ENCODE measurements at regions of chr14 and their contacts with region 1.

Region 1: GRCh38 chr14:24241829-24242443 is 487 bp downstream of the TINF2 start:
- DNase-seq: no peak
- ATAC-seq: peak; percentile 83
- H3K4me3 ChIP-seq: peak overlapping the region; percentile 71 to 91 (median 88)
- H3K4me3 Mint-ChIP-seq: peak overlapping the region; percentile 98
- H3K27ac ChIP-seq: peak overlapping the region; percentile 98 to 100
- H3K27ac Mint-ChIP-seq: peak overlapping the region; percentile 100
- H3K4me1 ChIP-seq: peaks cover 47 to 49% of the 10 kb centered on the region in 2 donors
- H3K4me1 Mint-ChIP-seq: peaks cover 64% of the 10 kb centered on the region
- H3K27me3 ChIP-seq: no peaks in the 10 kb centered on the region
- H3K27me3 Mint-ChIP-seq: no peaks in the 10 kb centered on the region
- CTCF ChIP-seq: peak; percentile 23

Region 2: GRCh38 chr14:24135834-24136542 is 105.9 kb before region 1 on chr14 and contains the start of gene PSME1:
- CTCF ChIA-PET with region 1: interaction called, 3 read pairs
- POLR2A ChIA-PET with region 1: interaction called, 10 read pairs
- intact Hi-C with region 1: loop called (anchors 1 kb)
- DNase-seq: peak; percentile 96
- ATAC-seq: peak; percentile 97
- H3K4me3 ChIP-seq: peak within 1 kb of the TSS; percentile 54 to 96 (median 78)
- H3K4me3 Mint-ChIP-seq: peak within 1 kb of the TSS; percentile 92
- H3K27ac ChIP-seq: peak within 1 kb of the TSS; percentile 87 to 97
- H3K27ac Mint-ChIP-seq: peak within 1 kb of the TSS; percentile 94
- H3K4me1 ChIP-seq: peaks cover 33 to 43% of the 10 kb centered on the region in 2 donors
- H3K4me1 Mint-ChIP-seq: peaks cover 57% of the 10 kb centered on the region
- H3K27me3 ChIP-seq: no peaks in the 10 kb centered on the region
- H3K27me3 Mint-ChIP-seq: no peaks in the 10 kb centered on the region
- CTCF ChIP-seq: no peak
- total RNA-seq, gene PSME1: 227 and 237 TPM in 2 replicates

Region 3: DNA sequence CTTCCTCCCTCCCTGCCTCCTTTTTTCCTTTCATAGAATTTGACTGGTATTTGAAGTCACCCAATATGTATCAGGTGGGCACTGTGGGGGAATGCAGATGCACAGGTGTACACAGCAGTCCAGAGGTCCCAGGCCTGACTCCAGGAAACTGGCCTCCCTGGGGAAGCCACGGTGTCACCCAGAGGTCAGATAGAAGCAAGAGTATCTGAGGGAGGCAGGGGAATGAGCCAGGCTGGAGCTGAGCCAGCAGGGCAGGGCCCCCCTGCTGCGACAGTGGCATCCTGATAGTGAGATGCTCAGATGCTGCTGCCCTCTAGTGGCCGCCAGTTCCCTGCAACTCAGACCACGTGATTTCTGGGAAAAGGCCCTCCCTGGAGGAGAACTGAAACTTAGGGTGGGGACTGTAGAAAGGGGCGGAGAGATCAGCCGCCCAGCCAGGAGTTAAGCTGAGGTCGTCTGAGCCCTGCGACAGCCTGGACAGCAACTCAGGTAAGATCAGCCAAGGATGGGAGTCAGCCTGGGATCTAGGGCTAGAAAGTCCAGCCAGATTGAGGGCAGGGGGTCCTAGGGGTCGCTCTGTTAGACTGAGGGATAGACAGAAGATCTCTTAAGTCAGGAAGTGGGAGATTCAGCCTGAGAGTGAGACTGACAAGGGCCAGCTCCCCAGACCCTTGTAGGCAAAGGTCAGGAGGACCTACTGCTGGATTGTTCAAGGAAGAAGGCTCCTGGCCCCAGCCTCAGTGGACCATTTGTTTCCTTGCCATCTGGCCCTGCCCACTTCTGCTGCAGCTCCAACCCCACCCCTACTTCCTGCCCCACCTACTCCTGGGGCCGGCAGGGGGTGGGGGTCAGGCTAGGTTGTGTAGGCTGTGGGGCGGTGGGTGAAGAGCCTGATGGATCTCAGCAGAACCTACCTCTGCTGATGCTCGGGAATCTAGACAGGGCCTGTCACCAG is 80.8 kb before region 1 on chr14 and contains the start of gene IRF9:
- CTCF ChIA-PET with region 1: interaction called, 11 read pairs
- POLR2A ChIA-PET with region 1: no interaction called
- intact Hi-C with region 1: loop called (anchors 1 kb)
- DNase-seq: peak; percentile 97
- ATAC-seq: peak; percentile 94
- H3K4me3 ChIP-seq: peak within 1 kb of the TSS; percentile 69 to 100 (median 91)
- H3K4me3 Mint-ChIP-seq: peak within 1 kb of the TSS; percentile 100
- H3K27ac ChIP-seq: peak within 1 kb of the TSS; percentile 85 to 88
- H3K27ac Mint-ChIP-seq: peak within 1 kb of the TSS; percentile 99
- H3K4me1 ChIP-seq: peaks cover 29 to 39% of the 10 kb centered on the region in 2 donors
- H3K4me1 Mint-ChIP-seq: peaks cover 42% of the 10 kb centered on the region
- H3K27me3 ChIP-seq: no peaks in the 10 kb centered on the region
- H3K27me3 Mint-ChIP-seq: no peaks in the 10 kb centered on the region
- CTCF ChIP-seq: peak; percentile 81
- total RNA-seq, gene IRF9: 243 and 269 TPM in 2 replicates

Region 4: GRCh38 chr14:24215495-24216344 is 26.2 kb before region 1 on chr14 and contains the start of gene MDP1:
- CTCF ChIA-PET with region 1: interaction called, 25 read pairs
- POLR2A ChIA-PET with region 1: interaction called, 17 read pairs
- intact Hi-C with region 1: loop called (anchors 1 kb)
- DNase-seq: peak; percentile 94
- ATAC-seq: peak; percentile 75
- H3K4me3 ChIP-seq: peak within 1 kb of the TSS; percentile 88 to 99 (median 96)
- H3K4me3 Mint-ChIP-seq: peak within 1 kb of the TSS; percentile 93
- H3K27ac ChIP-seq: peak within 1 kb of the TSS; percentile 89 to 98
- H3K27ac Mint-ChIP-seq: peak within 1 kb of the TSS; percentile 96
- H3K4me1 ChIP-seq: peaks cover 32 to 33% of the 10 kb centered on the region in 2 donors
- H3K4me1 Mint-ChIP-seq: peaks cover 38% of the 10 kb centered on the region
- H3K27me3 ChIP-seq: no peaks in the 10 kb centered on the region
- H3K27me3 Mint-ChIP-seq: no peaks in the 10 kb centered on the region
- CTCF ChIP-seq: peak; percentile 80
- total RNA-seq, gene MDP1: 11.3 and 17.0 TPM in 2 replicates

Region 5: GRCh38 chr14:24289649-24290249 is 47.8 kb after region 1 on chr14:
- CTCF ChIA-PET with region 1: interaction called, 254 read pairs
- POLR2A ChIA-PET with region 1: interaction called, 6 read pairs
- intact Hi-C with region 1: no loop called
- DNase-seq: peak; percentile 56
- ATAC-seq: peak; percentile 87
- H3K4me3 ChIP-seq: no peak overlapping the region
- H3K4me3 Mint-ChIP-seq: peak overlapping the region; percentile 34
- H3K27ac ChIP-seq: no peak overlapping the region
- H3K27ac Mint-ChIP-seq: peak overlapping the region; percentile 41
- H3K4me1 ChIP-seq: peaks cover 10 to 18% of the 10 kb centered on the region in 2 donors
- H3K4me1 Mint-ChIP-seq: peaks cover 12% of the 10 kb centered on the region
- H3K27me3 ChIP-seq: no peaks in the 10 kb centered on the region
- H3K27me3 Mint-ChIP-seq: no peaks in the 10 kb centered on the region
- CTCF ChIP-seq: no peak

Region 6: GRCh38 chr14:24332268-24332993 is 90.5 kb after region 1 on chr14:
- CTCF ChIA-PET with region 1: interaction called, 70 read pairs
- POLR2A ChIA-PET with region 1: interaction called, 6 read pairs
- intact Hi-C with region 1: loop called (anchors 1 kb)
- DNase-seq: peak; percentile 91
- ATAC-seq: peak; percentile 95
- H3K4me3 ChIP-seq: peak overlapping the region in 4 of 5 experiments; percentile 37 to 67 (median 44)
- H3K4me3 Mint-ChIP-seq: peak overlapping the region; percentile 93
- H3K27ac ChIP-seq: no peak overlapping the region
- H3K27ac Mint-ChIP-seq: peak overlapping the region; percentile 76
- H3K4me1 ChIP-seq: peaks cover 39 to 43% of the 10 kb centered on the region in 2 donors
- H3K4me1 Mint-ChIP-seq: peaks cover 39% of the 10 kb centered on the region
- H3K27me3 ChIP-seq: peaks cover 0 to 33% (median 19%) of the 10 kb centered on the region in 4 experiments
- H3K27me3 Mint-ChIP-seq: peaks cover 17% of the 10 kb centered on the region
- CTCF ChIP-seq: peak; percentile 80

Region 7: DNA sequence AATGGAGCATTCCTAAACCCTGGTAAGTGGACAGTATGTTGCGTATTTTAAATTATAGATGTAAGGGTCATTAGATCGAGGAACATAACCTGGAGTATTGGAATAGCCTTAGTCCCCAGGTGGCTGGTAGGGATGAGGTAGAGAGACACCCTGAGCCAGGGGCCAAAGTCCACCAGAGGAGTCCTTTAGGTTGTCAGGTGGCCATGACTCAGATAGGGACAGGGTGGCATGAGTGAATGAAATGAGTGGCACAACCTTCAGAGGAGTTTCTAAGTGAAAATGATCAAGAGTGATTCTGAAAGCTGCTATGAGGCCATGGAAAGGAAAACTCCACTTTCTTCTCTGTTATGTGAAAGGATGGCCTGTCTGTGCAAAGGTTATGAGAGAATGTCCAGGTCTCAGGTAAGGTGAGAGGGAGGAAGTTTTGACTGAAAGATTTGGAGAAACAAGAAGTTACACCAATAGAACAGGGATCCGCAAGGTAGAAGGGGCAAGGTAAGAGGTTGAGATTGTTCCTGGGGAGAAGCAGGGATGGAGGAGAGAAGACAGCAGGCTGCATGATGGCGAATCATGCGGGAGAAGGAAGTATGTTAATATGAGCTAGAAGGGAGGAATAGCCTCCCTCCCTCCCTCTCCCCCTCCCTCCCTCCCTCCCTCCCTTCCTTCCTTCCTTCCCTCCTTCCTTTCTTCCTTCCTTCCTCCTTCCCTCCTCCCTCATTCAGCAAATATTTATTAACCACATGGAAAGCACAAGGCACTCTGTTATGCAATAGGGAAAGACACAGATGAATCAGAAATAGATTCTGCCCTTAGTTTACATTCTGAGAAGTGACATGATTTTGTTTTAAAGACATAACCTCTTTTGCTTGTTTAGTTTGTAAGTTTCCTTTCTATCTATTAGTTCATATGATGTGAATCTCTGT is 111.9 kb after region 1 on chr14:
- CTCF ChIA-PET with region 1: no interaction called
- POLR2A ChIA-PET with region 1: no interaction called
- intact Hi-C with region 1: no loop called
- DNase-seq: no peak
- ATAC-seq: no peak
- H3K4me3 ChIP-seq: no peak overlapping the region
- H3K4me3 Mint-ChIP-seq: no peak overlapping the region
- H3K27ac ChIP-seq: no peak overlapping the region
- H3K27ac Mint-ChIP-seq: no peak overlapping the region
- H3K4me1 ChIP-seq: no peaks in the 10 kb centered on the region
- H3K4me1 Mint-ChIP-seq: no peaks in the 10 kb centered on the region
- H3K27me3 ChIP-seq: peaks cover 0 to 32% (median 12%) of the 10 kb centered on the region in 4 experiments
- H3K27me3 Mint-ChIP-seq: peaks cover 45% of the 10 kb centered on the region
- CTCF ChIP-seq: no peak

Measured in B cell (primary cell).